Mammary epithelial cell (primary cell): ENCODE measurements at regions of chr14 and their contacts with region 1.

Region 1: GRCh38 chr14:20019257-20019865 is at the start of gene OR4K14:
- DNase-seq: no peak
- H3K4me3 ChIP-seq: no peak within 1 kb of the TSS
- H3K27ac ChIP-seq: no peak within 1 kb of the TSS
- H3K4me1 ChIP-seq: no peaks in the 10 kb centered on the region
- H3K27me3 ChIP-seq: no peaks in the 10 kb centered on the region
- CTCF ChIP-seq: no peak
- total RNA-seq, gene OR4K14: not detected

Region 2: GRCh38 chr14:19823765-19824164 is 195.6 kb before region 1 on chr14:
- CTCF ChIA-PET with region 1: no interaction called
- dilution Hi-C with region 1: no loop called
- in situ Hi-C with region 1: no loop called
- intact Hi-C with region 1: no loop called
- DNase-seq: no peak
- H3K4me3 ChIP-seq: no peak overlapping the region
- H3K27ac ChIP-seq: no peak overlapping the region
- H3K4me1 ChIP-seq: no peaks in the 10 kb centered on the region
- H3K27me3 ChIP-seq: no peaks in the 10 kb centered on the region
- CTCF ChIP-seq: no peak

Region 3: DNA sequence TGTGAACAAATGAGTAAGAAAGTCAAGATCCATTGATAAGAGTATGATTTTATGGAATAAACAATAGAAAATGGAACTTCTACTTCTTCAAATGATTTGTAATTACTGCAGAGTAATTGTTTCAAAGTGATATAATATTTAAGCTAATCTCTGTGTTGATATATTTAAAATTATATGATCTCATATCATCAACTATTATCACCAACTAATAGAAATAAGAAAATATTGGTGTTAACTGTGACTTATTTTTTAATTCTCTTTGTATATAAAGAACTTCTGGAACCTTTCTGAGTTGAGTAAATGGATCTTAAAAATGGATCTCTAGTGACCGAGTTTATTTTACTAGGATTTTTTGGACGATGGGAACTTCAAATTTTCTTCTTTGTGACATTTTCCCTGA is 40.4 kb after region 1 on chr14 and contains the start of gene OR4L1:
- CTCF ChIA-PET with region 1: no interaction called
- dilution Hi-C with region 1: loop called (anchors 5 kb)
- in situ Hi-C with region 1: no loop called
- intact Hi-C with region 1: no loop called
- DNase-seq: no peak
- H3K4me3 ChIP-seq: no peak within 1 kb of the TSS
- H3K27ac ChIP-seq: no peak within 1 kb of the TSS
- H3K4me1 ChIP-seq: no peaks in the 10 kb centered on the region
- H3K27me3 ChIP-seq: no peaks in the 10 kb centered on the region
- CTCF ChIP-seq: no peak
- total RNA-seq, gene OR4L1: not detected

Region 4: DNA sequence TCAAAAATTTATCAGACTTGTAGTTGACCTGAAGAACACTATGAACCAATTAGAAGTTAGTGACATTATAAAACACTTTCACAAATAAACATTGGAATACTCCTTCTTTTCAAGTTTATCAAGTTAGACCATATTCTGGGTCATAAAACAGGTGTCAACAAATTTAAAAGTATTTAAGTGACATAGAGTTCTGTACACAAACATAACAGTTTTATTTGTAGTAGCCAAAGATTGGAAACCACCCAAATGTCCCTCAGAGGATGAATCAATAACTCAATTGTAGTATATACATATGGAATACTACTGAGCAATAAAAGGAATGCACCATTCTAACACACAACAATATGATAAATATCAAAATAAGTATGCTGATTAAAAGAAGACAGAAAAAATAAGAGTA is 147.7 kb after region 1 on chr14:
- CTCF ChIA-PET with region 1: no interaction called
- dilution Hi-C with region 1: no loop called
- in situ Hi-C with region 1: no loop called
- intact Hi-C with region 1: no loop called
- DNase-seq: no peak
- H3K4me3 ChIP-seq: no peak overlapping the region
- H3K27ac ChIP-seq: no peak overlapping the region
- H3K4me1 ChIP-seq: no peaks in the 10 kb centered on the region
- H3K27me3 ChIP-seq: no peaks in the 10 kb centered on the region
- CTCF ChIP-seq: no peak